SK-N-SH (cell line): ENCODE measurements at regions of chr2 and their contacts with region 1.

Region 1: GRCh38 chr2:121722479-121722878 is 14.2 kb downstream of the NIFK start:
- DNase-seq: no peak
- H3K4me3 ChIP-seq: peak overlapping the region in 1 of 2 experiments; percentile 9; a peak in 1 of 4 replicates
- H3K27ac ChIP-seq: peak overlapping the region in 1 of 2 experiments; percentile 64; a peak in 2 of 4 replicates
- H3K4me1 ChIP-seq: no peaks in the 10 kb centered on the region
- H3K27me3 ChIP-seq: no peaks in the 10 kb centered on the region
- CTCF ChIP-seq: no peak
- EP300 ChIP-seq: no peak
- RAD21 ChIP-seq: no peak

Region 2: DNA sequence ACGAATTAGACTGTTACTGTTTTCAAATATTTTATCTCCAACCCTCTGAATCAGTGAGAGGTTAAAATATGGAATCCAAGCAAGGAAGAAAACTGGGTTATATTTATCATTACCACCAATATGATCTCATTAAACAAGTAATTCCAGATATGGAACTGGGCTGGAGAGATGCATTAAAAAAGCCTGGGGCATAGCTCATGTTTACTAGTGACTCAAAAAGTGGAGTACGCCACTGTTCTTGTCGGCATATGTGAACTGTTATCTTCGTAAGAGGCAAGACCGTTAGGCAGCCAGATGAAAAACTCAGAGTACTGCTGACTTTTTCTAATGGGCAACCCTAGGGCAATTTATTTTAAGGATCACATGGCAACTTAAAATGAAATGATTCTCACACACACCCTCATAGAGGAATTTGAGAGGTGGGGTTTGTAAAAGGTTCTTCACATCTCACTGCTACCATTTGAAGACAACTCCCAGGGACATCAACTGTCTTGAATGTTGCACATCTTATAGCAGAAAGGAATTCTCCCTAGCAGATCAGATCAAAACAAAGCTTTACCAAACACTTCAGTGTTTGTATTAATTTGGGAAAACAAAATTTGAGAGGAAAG is 332.3 kb before region 1 on chr2:
- CTCF ChIA-PET with region 1: interaction called, 11 read pairs
- POLR2A ChIA-PET with region 1: no interaction called
- DNase-seq: peak; percentile 65
- H3K4me3 ChIP-seq: no peak overlapping the region
- H3K27ac ChIP-seq: peak overlapping the region in 1 of 2 experiments; percentile 18; a peak in 1 of 4 replicates
- H3K4me1 ChIP-seq: no peaks in the 10 kb centered on the region; a peak in 3 of 4 replicates
- H3K27me3 ChIP-seq: no peaks in the 10 kb centered on the region
- CTCF ChIP-seq: no peak
- EP300 ChIP-seq: peak in 1 of 2 experiments; percentile 63; a peak in 1 of 4 replicates
- RAD21 ChIP-seq: no peak

Region 3: GRCh38 chr2:121405233-121405632 is 317.2 kb before region 1 on chr2:
- CTCF ChIA-PET with region 1: interaction called, 38 read pairs
- POLR2A ChIA-PET with region 1: no interaction called
- DNase-seq: no peak
- H3K4me3 ChIP-seq: no peak overlapping the region
- H3K27ac ChIP-seq: no peak overlapping the region
- H3K4me1 ChIP-seq: peaks cover 0 to 2% of the 10 kb centered on the region in 2 experiments; a peak in 1 of 4 replicates
- H3K27me3 ChIP-seq: no peaks in the 10 kb centered on the region
- CTCF ChIP-seq: no peak
- EP300 ChIP-seq: no peak
- RAD21 ChIP-seq: no peak

Region 4: GRCh38 chr2:121665504-121665903 is 57.0 kb before region 1 on chr2:
- CTCF ChIA-PET with region 1: no interaction called
- POLR2A ChIA-PET with region 1: no interaction called
- DNase-seq: no peak
- H3K4me3 ChIP-seq: no peak overlapping the region
- H3K27ac ChIP-seq: no peak overlapping the region
- H3K4me1 ChIP-seq: peaks cover 0 to 2% of the 10 kb centered on the region in 2 experiments; a peak in 1 of 4 replicates
- H3K27me3 ChIP-seq: no peaks in the 10 kb centered on the region
- CTCF ChIP-seq: no peak
- EP300 ChIP-seq: no peak
- RAD21 ChIP-seq: no peak

Region 5: DNA sequence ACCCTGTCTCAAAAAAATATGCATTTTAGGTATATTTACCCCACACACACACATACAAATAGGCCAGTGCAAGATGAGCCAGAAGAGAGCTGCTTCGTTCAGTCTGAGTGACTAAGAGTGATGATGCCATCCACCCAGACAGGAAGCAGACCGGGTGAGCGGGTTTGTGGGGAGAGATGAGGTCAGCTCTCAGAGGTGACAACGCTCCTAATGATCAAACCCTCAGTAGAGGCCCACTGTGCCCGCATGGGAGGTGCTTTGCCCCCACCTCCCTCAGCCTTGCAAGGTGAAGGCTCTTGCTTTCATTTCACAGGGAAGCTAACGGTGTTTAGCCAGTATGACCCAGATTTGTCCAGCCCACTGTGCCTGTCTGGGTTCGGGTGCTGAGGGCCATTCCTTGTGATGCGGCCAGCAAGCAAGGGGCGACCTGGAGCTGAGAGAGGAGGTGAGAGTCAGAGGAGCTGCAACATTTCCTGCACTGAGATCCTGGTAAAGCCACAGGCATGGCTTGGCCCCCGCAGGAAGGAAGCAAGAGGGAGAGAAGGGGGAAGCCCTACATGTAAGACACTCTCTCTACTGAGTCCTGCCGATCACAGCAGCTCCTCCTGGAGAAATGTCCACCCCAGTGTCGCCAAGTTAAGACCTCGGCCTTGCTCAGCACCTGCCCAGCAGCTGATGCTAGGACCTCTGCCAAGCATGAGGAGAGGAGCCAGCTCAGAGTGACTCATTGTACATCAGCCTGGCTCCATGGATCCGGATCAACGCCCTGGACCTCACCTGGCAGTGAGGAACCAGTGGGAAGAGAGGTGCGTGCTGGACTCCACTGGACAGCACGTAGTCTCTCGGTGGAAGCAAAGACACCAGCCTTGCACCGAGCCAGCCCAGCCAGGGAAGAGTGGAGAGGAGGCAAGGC is 22.8 kb before region 1 on chr2:
- CTCF ChIA-PET with region 1: interaction called, 11 read pairs
- POLR2A ChIA-PET with region 1: interaction called, 5 read pairs
- DNase-seq: no peak
- H3K4me3 ChIP-seq: no peak overlapping the region
- H3K27ac ChIP-seq: peak overlapping the region in 1 of 2 experiments; percentile 31; a peak in 1 of 4 replicates
- H3K4me1 ChIP-seq: peaks cover 3 to 14% of the 10 kb centered on the region in 2 experiments; a peak in 3 of 4 replicates
- H3K27me3 ChIP-seq: no peaks in the 10 kb centered on the region
- CTCF ChIP-seq: no peak
- EP300 ChIP-seq: peak in 1 of 2 experiments; percentile 6; a peak in 1 of 4 replicates
- RAD21 ChIP-seq: no peak